Breast epithelium (tissue), 4 donors: ENCODE measurements at regions of chr7 and their contacts with region 1.

Region 1: GRCh38 chr7:156703773-156704482 is 63.4 kb downstream of the RNF32 start:
- DNase-seq: no peak
- H3K4me3 ChIP-seq: no peak overlapping the region
- H3K27ac ChIP-seq: no peak overlapping the region
- H3K4me1 ChIP-seq: no peaks in the 10 kb centered on the region
- H3K27me3 ChIP-seq: no peaks in the 10 kb centered on the region
- CTCF ChIP-seq: no peak
- POLR2A ChIP-seq: no peak

Region 2: DNA sequence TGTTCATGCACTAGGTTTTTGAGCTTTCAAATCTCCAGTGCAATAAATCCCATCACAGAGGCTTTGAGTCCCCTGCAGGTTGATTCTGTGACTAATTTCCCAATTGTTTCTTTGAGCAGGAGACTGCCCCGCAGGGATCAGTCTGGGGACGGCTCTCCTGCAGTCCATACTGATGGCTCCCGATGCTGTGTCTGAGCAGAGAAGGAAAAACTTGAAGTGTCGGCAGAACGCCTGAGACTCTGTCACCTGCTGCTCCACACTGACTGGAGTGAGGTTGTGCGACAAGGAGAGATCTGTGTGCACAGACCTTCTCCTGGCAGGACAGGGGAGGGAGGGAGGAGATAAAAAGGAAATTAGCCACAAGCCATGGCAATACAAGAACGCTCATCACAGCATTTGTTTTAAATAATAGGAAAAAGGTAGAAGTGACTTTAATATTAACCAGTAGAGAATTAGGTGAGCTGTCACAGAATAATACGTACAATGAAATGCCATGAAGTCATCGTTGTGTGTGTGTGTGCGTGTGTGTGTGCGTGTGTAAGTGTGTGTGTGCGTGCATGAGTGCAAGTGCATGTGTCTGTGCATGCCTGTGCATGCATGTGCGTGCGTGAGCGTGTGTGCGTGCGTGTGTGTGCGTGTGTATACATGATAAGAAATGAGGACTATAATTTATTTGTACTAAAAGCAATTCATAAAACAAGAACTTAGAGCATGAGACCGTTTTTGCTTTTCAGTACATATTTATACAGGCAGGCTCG is 1595.6 kb before region 1 on chr7:
- intact Hi-C with region 1: no loop called
- DNase-seq: no peak
- H3K4me3 ChIP-seq: no peak overlapping the region
- H3K27ac ChIP-seq: no peak overlapping the region
- H3K4me1 ChIP-seq: no peaks in the 10 kb centered on the region
- H3K27me3 ChIP-seq: peaks cover 0 to 55% of the 10 kb centered on the region in 2 donors
- CTCF ChIP-seq: no peak
- POLR2A ChIP-seq: no peak

Region 3: DNA sequence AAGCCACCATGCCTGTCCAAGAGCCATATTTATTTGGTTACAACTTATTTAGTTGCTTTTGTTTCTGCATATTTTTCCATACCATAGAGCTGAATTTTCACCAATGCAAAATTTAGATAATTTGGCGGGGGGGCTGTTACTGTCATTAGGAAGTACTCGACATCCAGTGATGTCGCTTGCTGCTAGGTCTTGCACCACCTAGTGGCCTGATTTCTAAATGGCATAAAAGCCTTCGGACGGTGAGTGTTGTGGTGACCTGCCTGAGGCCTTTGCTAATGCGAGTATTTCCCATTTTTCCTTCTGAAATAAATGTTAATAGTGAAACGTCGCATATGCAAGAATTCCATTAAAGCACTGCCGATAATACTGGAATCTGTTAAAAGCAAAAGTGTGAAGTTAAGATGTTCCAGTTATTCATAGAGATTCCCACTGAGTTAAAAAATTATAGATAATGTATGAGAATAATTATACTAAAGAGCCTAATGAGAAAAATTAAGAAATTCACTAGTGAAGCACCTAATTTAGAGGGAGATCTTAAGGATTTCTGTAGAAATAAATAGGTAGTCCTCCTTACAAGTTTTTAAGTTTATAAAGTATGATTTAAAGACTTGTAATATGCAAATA is 546.8 kb after region 1 on chr7:
- intact Hi-C with region 1: no loop called
- DNase-seq: no peak
- H3K4me3 ChIP-seq: no peak overlapping the region
- H3K27ac ChIP-seq: no peak overlapping the region
- H3K4me1 ChIP-seq: no peaks in the 10 kb centered on the region
- H3K27me3 ChIP-seq: no peaks in the 10 kb centered on the region
- CTCF ChIP-seq: peak; percentile 43 to 61 (median 61)
- POLR2A ChIP-seq: no peak

Region 4: DNA sequence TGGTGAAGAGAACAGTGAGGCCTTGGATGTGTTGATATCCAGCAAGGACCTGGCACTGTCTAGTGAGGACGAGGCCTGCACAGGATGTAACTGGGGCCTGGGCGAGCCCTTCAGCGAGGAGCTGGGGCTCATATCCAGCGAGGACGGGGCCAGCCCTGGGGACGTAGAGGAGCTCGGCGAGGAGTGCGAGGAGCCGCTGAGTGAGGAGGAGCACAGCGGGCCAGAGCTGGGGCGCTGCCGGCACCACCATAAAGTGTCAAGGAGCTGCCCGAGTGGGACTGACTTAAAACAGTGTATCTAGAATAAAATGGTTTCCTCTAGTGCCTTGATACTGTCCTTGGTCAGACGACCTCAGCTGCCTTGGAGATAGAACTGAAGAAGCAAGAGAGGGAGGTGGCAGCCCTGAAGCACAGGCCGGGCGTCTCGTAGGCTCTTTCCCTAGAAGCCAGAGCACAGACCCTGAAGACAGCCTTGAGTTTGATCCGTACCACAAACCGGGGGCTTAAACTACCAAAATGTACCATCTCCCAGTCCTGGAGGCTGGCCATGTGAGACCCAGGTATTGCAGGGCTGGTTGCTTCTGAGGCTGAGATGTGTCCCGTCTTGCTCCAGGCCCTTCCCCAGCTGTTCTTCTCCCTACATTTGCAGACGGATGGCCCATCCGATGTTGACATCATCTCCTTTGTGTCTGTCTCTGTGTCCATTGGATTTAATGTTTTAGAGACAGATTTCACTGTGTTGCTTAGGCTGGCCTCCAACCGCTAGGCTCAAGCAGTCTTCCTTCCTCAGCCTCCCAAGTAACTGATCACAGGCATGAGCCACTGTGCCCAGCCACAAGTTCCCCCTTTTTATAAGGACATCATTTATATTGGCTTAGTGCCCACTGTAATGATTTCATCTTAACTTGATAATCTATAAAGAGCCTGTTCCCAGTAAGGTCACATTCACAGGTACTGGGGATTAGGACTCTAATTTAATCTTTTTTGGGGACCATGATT is 668.6 kb after region 1 on chr7:
- intact Hi-C with region 1: loop called (anchors 5 kb)
- DNase-seq: no peak
- H3K4me3 ChIP-seq: no peak overlapping the region
- H3K27ac ChIP-seq: no peak overlapping the region
- H3K4me1 ChIP-seq: no peaks in the 10 kb centered on the region
- H3K27me3 ChIP-seq: no peaks in the 10 kb centered on the region
- CTCF ChIP-seq: no peak
- POLR2A ChIP-seq: no peak